ENCODE measurements at regions of chr9 and their contacts with region 1.

Region 1: GRCh38 chr9:5389109-5389732 is 48.5 kb downstream of the PLGRKT start:
- DNase-seq: no peak
- H3K4me3 ChIP-seq: no peak overlapping the region
- H3K27ac ChIP-seq: no peak overlapping the region
- H3K4me1 ChIP-seq: no peaks in the 10 kb centered on the region
- H3K27me3 ChIP-seq: no peaks in the 10 kb centered on the region
- CTCF ChIP-seq: no peak
- POLR2A ChIP-seq: no peak

Region 2: GRCh38 chr9:4009006-4009511 is 1380.2 kb before region 1 on chr9:
- intact Hi-C with region 1: loop called (anchors 5 kb)
- DNase-seq: no peak
- H3K4me3 ChIP-seq: no peak overlapping the region
- H3K27ac ChIP-seq: no peak overlapping the region
- H3K4me1 ChIP-seq: no peaks in the 10 kb centered on the region
- H3K27me3 ChIP-seq: no peaks in the 10 kb centered on the region
- CTCF ChIP-seq: no peak
- POLR2A ChIP-seq: no peak

Region 3: GRCh38 chr9:5749306-5749705 is 360.1 kb after region 1 on chr9:
- intact Hi-C with region 1: loop called (anchors 10 kb)
- DNase-seq: no peak
- H3K4me3 ChIP-seq: no peak overlapping the region
- H3K27ac ChIP-seq: no peak overlapping the region
- H3K4me1 ChIP-seq: no peaks in the 10 kb centered on the region
- H3K27me3 ChIP-seq: no peaks in the 10 kb centered on the region
- CTCF ChIP-seq: no peak
- POLR2A ChIP-seq: no peak

Measured in breast epithelium (tissue), 4 donors.